GM10248 (cell line): ENCODE measurements at regions of chr14 and their contacts with region 1.

Region 1: DNA sequence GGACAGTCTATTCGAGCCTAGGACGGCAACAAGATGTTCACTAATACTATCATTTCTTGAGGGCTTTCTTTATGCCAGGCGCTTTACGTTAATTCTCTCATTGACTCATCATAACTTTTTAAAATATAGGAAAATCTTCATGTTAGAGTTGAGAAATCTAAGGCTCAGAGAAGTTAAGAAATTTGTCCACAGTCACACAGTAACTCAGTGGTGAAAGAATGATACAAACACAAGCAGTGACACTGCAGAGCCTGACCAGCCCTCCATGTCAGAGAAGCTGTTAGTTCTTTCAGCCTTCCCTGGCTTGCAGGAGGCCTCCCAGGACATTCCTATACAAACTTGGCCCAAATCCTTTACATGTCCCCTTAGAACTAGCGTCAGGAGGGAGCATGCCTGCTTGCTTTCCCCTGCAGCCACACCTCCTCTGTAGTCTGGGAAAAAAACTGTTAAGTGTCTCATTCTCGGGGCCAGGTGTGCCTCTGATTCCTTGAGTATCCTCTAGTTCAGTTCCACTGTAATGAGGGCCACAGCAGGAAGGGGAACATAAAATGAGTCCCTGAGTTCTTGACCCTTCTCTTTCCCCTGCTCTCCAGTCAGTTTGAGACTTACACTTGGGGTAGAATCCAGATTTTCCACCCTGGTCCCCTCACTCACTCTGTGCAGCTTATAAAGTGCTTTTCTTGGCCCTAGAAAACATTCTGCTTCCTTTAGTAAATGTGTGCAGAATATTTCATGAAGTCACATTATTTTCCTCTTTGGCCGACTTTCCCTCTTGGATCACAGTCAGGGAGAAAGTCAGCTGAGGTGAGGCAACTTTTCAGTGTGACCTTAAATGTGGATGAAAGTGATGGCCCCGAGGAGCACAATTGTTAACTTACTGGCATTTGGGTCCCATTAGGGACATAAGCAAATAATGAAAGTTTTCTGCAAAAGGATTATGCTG is 152.2 kb upstream of the HIF1A start:
- DNase-seq: no peak
- CTCF ChIP-seq: no peak

Region 2: GRCh38 chr14:61475316-61475715 is 67.8 kb before region 1 on chr14:
- CTCF ChIA-PET with region 1: no interaction called
- POLR2A ChIA-PET with region 1: no interaction called
- DNase-seq: peak; percentile 52
- CTCF ChIP-seq: peak; percentile 39

Region 3: GRCh38 chr14:61531741-61532505 is 11.2 kb before region 1 on chr14:
- CTCF ChIA-PET with region 1: interaction called, 11 read pairs
- POLR2A ChIA-PET with region 1: no interaction called
- DNase-seq: no peak
- CTCF ChIP-seq: no peak